ENCODE measurements at regions of chr9 and their contacts with region 1.

Region 1: DNA sequence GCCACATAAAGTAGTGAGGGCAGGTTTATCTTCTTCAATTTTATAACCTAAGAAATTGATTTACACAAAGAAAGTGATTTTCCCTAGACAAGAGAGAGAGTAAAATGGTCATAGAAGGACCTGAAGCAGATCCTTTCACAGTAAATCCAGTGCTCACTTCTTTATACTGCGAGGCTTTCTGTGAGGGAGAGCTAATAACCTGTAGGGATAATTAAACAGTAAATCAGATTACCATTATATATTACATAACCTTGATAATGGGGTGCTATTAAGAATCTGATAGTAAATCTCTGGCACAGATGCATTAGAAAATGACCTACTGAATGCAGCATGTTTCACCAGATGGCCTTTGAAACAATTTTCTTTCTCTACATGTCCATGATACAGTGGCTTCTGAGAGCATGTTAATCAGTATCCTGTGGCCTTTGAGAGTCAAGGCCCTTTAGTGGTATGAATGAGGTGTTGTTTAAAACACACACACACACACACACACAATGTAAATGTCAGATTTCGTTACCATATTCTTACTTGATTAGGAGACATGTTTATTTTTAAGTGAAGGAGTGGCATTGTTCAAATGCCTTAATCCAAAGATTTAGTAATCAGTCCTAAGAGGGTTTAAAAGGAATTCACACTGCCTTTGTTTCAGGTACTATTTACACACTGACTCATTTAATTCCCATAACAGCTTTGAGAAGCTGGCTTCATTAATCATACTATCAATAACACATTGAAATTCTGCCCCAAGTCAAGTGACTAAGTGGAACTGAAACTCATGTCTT is 124.7 kb downstream of the ALDH1A1 start:
- DNase-seq: peak; percentile 78
- H3K4me3 Mint-ChIP-seq: no peak overlapping the region
- H3K27ac Mint-ChIP-seq: peak overlapping the region; percentile 72
- H3K4me1 Mint-ChIP-seq: peaks cover 14% of the 10 kb centered on the region
- H3K27me3 Mint-ChIP-seq: peaks cover 3% of the 10 kb centered on the region
- CTCF ChIP-seq: no peak

Region 2: DNA sequence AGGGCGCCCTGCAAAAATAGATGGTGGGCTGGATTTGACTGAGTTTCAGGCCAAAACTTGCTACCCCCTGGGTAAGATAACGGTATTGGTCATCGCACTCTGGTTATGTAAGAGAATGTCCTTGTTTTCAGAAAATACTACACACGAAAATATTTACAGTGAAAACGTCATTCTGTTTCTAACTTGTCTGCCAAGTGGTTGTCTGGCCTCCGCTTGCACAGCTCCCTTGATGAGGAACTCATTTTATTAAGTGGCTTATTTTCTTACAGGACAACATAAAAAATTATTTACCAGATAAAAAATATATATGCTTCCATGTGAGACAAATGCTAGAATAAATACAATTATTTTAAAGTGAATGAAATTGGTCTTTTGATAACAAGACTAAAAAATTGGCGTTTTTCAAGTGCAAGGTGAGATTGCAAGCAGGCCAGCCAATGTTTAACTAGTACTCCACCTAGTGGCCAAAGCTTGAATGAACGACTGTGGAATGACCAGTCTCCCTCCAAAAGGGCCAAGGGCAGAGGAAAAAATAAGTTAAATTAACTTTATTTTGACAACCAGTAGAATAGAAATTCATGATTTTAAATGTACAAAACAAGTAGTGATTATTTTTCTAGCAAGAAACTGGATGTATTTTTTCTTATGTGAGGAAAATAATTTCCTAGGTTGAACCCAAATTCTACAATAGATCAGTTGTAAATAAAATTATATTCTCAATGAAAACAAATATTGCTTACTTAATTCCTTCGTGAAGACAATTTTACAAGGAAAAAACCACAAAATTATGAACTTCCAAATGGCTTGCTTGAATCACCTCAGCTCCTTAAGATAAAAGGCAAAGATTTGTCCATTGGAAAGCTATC is 556.3 kb before region 1 on chr9:
- CTCF ChIA-PET with region 1: interaction called, 30 read pairs
- POLR2A ChIA-PET with region 1: no interaction called
- intact Hi-C with region 1: no loop called
- DNase-seq: peak; percentile 77
- H3K4me3 Mint-ChIP-seq: no peak overlapping the region
- H3K27ac Mint-ChIP-seq: no peak overlapping the region
- H3K4me1 Mint-ChIP-seq: peaks cover 6% of the 10 kb centered on the region
- H3K27me3 Mint-ChIP-seq: no peaks in the 10 kb centered on the region
- CTCF ChIP-seq: peak; percentile 74

Region 3: DNA sequence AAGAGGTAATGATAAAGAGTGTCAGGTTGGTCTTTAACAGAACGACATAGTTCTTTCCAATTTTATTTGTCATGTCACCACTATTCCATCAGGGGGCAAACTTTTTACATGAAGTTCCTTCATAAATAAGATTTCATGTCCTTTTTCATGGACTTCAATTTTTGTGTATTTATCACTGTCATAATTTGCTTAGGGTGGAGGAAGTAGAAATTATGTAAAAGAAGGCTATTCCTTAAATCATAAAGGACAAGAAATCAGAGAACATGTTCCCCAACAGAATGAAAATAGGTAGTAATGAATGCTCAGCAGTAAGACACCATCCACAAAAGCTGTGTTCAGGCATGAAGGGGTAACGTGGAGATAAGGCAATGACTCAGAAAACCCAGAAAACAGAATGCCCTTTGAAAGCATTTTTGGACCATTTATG is 535.9 kb before region 1 on chr9:
- CTCF ChIA-PET with region 1: interaction called, 240 read pairs
- POLR2A ChIA-PET with region 1: interaction called, 3 read pairs
- intact Hi-C with region 1: no loop called
- DNase-seq: peak; percentile 48
- H3K4me3 Mint-ChIP-seq: no peak overlapping the region
- H3K27ac Mint-ChIP-seq: peak overlapping the region; percentile 75
- H3K4me1 Mint-ChIP-seq: peaks cover 22% of the 10 kb centered on the region
- H3K27me3 Mint-ChIP-seq: no peaks in the 10 kb centered on the region
- CTCF ChIP-seq: peak; percentile 58

Region 4: DNA sequence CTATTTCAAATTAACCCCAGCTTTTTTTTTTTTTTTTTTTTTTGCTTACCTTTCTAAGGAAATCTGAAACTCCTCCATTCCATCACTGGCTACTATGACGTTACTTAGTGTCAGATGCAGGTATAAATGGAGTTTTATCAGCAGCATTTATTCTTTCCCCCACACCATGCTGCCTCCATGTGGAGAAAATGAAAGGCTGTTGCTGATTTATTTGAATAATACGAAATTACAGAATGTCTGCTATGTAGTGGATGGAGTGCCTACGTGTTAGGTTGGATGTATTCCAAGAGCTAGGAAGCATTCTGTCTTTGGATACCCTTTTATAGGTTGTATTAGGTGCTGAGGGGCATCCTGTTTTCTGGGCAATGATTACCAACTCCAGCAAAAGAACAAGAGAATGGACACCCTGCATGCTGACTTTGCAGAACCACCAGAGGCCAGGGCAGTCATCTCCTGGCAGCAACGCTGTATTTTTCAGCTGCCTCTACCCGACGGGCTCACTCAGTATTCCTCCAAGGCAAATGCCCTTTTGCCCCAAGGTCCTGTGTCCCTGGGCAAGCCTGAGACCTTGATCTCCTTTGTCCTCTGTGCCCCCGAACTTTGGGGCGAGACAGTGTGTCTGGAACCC is 74.8 kb before region 1 on chr9:
- CTCF ChIA-PET with region 1: interaction called, 22 read pairs
- POLR2A ChIA-PET with region 1: no interaction called
- intact Hi-C with region 1: no loop called
- DNase-seq: peak; percentile 32
- H3K4me3 Mint-ChIP-seq: no peak overlapping the region
- H3K27ac Mint-ChIP-seq: no peak overlapping the region
- H3K4me1 Mint-ChIP-seq: no peaks in the 10 kb centered on the region
- H3K27me3 Mint-ChIP-seq: peaks cover 53% of the 10 kb centered on the region
- CTCF ChIP-seq: peak; percentile 32

Region 5: DNA sequence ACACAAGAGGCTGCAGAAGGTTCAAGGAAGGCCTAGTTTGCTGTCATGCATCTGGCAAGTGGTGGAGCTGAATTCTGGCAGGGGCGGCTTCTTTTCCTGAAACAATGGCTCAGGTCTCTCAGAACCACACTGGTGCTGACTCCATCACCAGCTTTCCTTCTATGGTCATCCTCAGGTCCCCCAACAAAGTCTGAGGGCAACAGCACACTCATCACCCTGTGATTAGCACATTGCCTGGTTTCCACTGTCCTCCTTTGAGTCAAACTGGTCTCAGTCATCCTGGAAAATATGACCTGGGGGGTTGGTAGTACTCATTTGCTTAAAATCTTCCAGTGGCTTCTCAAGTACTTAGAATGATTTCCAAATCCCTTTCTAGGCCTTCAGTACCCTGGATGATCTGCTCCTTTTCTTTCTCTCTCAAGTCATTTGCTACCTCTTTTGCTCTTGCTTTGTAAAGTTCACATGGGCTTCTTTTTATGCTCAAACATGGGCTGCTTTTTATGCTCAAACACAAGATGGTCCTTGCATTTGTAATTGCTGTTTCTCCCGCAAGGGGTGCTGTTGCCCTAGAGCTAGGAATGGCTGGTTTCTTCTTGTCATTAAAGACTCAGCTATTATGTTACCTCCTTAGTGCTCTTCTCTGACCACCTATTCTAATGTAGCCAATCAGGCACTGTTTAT is 20.2 kb before region 1 on chr9:
- CTCF ChIA-PET with region 1: interaction called, 17 read pairs
- POLR2A ChIA-PET with region 1: no interaction called
- intact Hi-C with region 1: no loop called
- DNase-seq: peak; percentile 42
- H3K4me3 Mint-ChIP-seq: no peak overlapping the region
- H3K27ac Mint-ChIP-seq: no peak overlapping the region
- H3K4me1 Mint-ChIP-seq: no peaks in the 10 kb centered on the region
- H3K27me3 Mint-ChIP-seq: peaks cover 16% of the 10 kb centered on the region
- CTCF ChIP-seq: no peak

Measured in MCF 10A (cell line).